ENCODE measurements at regions of chr6 and their contacts with region 1.

Region 1: DNA sequence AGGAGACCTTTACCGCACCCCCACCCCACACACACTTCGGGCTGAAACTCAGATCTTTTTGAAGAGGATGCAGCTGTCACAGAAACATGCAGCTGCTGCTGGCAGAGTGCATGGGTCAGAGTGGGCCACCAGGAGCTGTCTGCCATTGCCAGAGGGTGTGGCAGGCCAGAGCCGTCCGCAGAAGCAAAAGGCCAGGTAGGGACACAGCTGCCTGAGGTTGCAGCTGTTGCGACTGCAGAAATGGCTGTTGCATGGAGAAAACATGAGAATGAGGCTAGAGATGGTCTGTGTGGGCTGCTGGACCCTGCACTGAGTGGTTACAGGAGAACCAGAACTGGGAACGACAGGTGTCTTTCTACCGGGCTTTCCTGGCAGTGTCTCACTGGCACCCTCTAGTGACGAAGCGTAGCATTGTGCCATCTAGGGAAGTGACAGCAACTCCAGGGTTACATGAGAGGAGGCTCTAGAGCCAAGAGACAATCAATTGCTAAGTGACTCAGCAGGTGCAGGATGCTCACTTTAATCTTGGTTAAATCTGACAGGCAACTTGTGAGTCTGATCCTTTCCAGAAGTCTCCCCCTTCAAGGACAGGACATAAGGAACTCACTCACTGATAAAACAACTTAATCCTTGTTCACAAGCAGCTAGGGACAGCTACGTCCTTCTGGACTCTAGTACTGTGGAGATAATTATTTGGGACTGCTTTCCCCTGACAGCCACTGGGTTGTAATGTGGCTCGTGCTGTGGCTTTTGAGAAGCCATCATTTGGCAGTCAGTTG is 29.1 kb upstream of the SERPINB9 start:
- DNase-seq: peak; percentile 79 to 83
- H3K4me3 ChIP-seq: no peak overlapping the region
- H3K27ac ChIP-seq: no peak overlapping the region
- H3K4me1 ChIP-seq: no peaks in the 10 kb centered on the region
- H3K27me3 ChIP-seq: no peaks in the 10 kb centered on the region
- CTCF ChIP-seq: peak; percentile 73 to 97 (median 85)
- POLR2A ChIP-seq: no peak

Region 2: DNA sequence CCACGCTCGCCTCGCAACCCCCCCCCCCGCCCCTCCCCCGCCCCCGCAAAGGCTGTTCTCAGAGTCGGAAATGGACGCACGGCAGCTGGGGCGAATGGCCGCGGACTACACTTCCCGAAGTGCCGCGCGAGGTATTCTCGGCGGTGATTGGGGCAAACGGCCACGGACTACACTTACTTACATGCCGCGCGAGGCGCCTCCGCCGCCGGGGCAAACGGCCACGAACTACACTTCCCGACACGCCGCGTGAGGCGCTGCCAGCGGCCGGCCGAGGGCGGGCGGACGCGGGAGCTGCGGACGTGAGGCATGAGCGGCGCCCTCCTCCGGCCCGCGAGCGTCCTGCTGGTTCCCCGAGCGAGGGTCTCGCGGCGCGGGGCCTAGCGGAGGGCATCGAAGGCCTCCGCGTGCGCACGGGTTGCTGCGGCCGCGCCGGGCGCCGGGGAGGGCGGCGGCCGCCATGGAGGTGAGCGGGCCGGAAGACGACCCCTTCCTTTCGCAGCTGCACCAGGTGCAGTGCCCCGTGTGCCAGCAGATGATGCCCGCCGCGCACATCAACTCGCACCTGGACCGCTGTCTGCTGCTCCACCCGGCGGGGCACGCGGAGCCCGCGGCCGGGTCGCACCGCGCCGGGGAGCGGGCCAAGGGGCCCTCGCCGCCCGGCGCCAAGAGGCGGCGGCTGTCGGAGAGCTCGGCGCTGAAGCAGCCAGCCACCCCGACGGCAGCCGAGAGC is 166.8 kb before region 1 on chr6 and contains the start of gene WRNIP1:
- intact Hi-C with region 1: no loop called
- DNase-seq: peak in 1 of 2 donors; percentile 100
- H3K4me3 ChIP-seq: peak within 1 kb of the TSS; percentile 78 to 85
- H3K27ac ChIP-seq: peak within 1 kb of the TSS; percentile 92
- H3K4me1 ChIP-seq: peaks cover 45% of the 10 kb centered on the region
- H3K27me3 ChIP-seq: no peaks in the 10 kb centered on the region
- CTCF ChIP-seq: peak; percentile 29 to 55 (median 42)
- POLR2A ChIP-seq: peak in 1 of 2 donors; percentile 81
- total RNA-seq, gene WRNIP1: 50.1 TPM

Region 3: DNA sequence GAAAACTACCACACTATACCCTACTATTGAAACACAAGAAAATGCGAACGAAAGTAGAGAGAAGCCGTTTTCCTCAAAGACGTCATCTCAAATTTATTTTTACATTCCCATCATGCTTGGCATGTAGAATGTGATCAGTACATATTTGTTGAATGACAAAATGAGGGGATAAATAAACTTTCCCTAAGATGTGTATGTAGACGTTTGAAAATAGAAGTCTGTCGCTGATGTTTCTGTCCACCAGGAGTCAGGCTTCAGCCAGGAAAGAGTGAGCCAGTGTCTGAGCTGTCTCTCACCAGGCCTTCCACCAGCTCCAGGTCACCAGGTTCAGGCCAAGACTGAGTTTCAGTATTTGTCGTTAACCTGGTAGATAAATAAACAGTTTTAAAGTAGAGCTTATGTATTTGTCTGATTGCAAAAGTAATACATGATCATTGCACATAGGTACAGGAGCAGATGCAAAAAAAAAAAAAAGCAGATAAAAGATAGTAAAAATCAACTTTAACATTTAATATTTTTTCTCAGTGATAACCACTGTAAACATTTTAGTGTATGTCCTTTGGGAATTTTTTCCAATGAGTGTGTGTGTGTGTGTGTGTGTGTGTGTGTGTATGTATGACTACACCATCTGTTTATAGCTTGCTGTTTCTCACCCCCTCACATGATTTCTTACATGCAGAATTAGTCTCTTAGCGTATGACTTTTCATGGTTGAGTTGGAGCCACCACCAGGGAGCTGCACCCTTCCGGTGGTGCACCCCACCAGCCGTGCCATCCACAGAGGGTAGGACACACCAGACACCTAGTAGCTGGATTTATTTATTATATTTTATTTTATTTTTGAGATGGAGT is 140.8 kb before region 1 on chr6:
- intact Hi-C with region 1: loop called (anchors 5 kb)
- DNase-seq: peak in 1 of 2 donors; percentile 67
- H3K4me3 ChIP-seq: no peak overlapping the region
- H3K27ac ChIP-seq: peak overlapping the region; percentile 72
- H3K4me1 ChIP-seq: peaks cover 40% of the 10 kb centered on the region
- H3K27me3 ChIP-seq: no peaks in the 10 kb centered on the region
- CTCF ChIP-seq: peak; percentile 42 to 64 (median 55)
- POLR2A ChIP-seq: no peak

Region 4: DNA sequence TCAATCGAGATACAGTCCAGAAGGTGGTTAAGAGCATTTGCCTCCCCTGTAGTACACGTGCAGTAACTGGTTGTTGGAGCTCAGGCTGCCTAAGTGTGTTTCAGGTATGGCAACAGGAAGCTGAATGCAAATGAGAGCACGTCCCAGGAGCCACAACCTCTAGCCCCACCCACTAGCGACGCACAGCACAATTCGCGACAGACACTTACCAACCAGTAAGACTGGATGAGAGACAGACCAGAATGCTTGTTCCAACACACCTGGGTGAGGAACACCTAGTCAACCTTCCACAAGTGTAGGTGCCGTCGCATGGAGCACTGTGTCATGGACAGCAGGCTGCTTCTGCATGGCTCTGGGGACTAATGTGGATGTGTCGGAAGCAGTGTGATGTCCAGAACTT is 83.3 kb before region 1 on chr6:
- intact Hi-C with region 1: loop called (anchors 5 kb)
- DNase-seq: no peak
- H3K4me3 ChIP-seq: no peak overlapping the region
- H3K27ac ChIP-seq: no peak overlapping the region
- H3K4me1 ChIP-seq: peaks cover 6% of the 10 kb centered on the region
- H3K27me3 ChIP-seq: no peaks in the 10 kb centered on the region
- CTCF ChIP-seq: no peak
- POLR2A ChIP-seq: no peak

Region 5: GRCh38 chr6:2986722-2987221 is 54.6 kb after region 1 on chr6:
- intact Hi-C with region 1: no loop called
- DNase-seq: no peak
- H3K4me3 ChIP-seq: no peak overlapping the region
- H3K27ac ChIP-seq: peak overlapping the region; percentile 96
- H3K4me1 ChIP-seq: peaks cover 29% of the 10 kb centered on the region
- H3K27me3 ChIP-seq: no peaks in the 10 kb centered on the region
- CTCF ChIP-seq: no peak
- POLR2A ChIP-seq: no peak

Measured in vagina (tissue), 2 donors.